ENCODE measurements at regions of chr2 and their contacts with region 1.

Region 1: GRCh38 chr2:176643646-176644045 is 374.4 kb downstream of the MTX2 start:
- DNase-seq: no peak
- ATAC-seq: no peak

Region 2: GRCh38 chr2:176461809-176462382 is 181.8 kb before region 1 on chr2:
- intact Hi-C with region 1: loop called in 1 of 2 experiments (anchors 5 kb)
- DNase-seq: no peak
- ATAC-seq: peak; percentile 81

Measured in left colon (tissue), 2 donors.